AG04450 (cell line): ENCODE measurements at regions of chr3 and their contacts with region 1.

Region 1: GRCh38 chr3:150495563-150496168 is 50.6 kb downstream of the SERP1 start:
- DNase-seq: peak; percentile 16
- H3K4me3 ChIP-seq: no peak overlapping the region
- H3K27ac ChIP-seq: no peak overlapping the region
- H3K27me3 ChIP-seq: no peaks in the 10 kb centered on the region
- CTCF ChIP-seq: peak; percentile 61

Region 2: DNA sequence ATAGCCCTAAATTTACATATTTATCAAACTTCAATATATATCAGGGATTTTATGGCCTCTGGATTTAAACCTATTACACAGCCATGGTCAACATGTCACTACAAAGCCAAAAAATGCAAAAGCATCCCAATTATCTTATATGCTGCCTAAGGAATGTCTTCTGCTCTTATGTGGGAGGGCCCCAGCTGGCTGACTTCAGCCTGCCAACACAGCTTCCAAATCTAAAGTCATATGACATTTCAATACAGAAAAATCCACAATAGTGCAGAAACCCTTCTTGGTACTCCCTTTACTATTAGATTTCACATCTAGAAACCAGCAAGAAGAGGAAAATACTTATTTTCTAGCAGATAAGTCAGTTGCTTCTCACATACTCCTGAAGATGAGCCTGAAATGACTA is 531.4 kb before region 1 on chr3:
- CTCF ChIA-PET with region 1: interaction called, 10 read pairs
- POLR2A ChIA-PET with region 1: no interaction called
- DNase-seq: no peak
- H3K4me3 ChIP-seq: no peak overlapping the region
- H3K27ac ChIP-seq: no peak overlapping the region
- H3K27me3 ChIP-seq: no peaks in the 10 kb centered on the region
- CTCF ChIP-seq: no peak

Region 3: GRCh38 chr3:150062492-150062891 is 433.2 kb before region 1 on chr3:
- CTCF ChIA-PET with region 1: no interaction called
- POLR2A ChIA-PET with region 1: no interaction called
- DNase-seq: no peak
- H3K4me3 ChIP-seq: peak overlapping the region; percentile 36
- H3K27ac ChIP-seq: peak overlapping the region; percentile 75
- H3K27me3 ChIP-seq: no peaks in the 10 kb centered on the region
- CTCF ChIP-seq: no peak

Region 4: DNA sequence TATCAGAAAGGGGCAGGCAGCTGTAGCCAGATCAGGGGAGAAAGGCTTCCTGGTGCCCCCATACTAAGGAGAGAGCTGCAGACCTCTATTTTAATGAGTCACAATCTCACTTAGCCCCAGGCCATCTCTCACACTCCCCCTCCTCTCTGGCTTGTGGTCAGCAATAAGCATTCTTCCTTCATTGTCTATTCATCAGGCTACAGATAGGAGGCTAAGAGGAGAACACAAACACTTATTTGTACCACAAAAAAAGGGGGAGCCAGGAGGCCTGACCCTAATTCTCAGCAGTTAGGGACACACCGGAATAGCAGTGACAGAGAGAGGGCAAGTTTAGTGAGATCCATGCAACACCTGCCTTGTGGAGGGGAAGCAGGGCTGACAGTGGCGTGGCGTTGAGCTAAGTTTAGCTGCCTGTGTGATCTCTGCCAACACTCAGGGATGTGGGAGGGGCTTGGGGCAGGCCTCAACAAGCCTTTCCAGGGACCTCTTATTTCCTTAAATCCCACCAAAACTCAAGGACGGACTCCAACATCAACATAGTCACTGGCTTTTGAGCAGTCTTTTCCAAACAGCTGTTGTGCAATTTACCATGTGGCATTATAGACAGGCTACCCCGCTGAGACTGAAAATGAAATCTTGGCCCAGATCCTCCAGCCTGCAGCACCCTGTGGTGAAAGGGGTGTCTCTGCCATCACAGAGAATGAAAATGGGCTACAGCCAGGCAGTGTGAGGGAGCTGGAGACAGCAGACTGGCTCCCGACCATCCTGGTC is 279.4 kb before region 1 on chr3:
- CTCF ChIA-PET with region 1: interaction called, 15 read pairs
- POLR2A ChIA-PET with region 1: no interaction called
- DNase-seq: no peak
- H3K4me3 ChIP-seq: no peak overlapping the region; the same call in 1 of the 2 replicates
- H3K27ac ChIP-seq: peak overlapping the region; percentile 54
- H3K27me3 ChIP-seq: peaks cover 4% of the 10 kb centered on the region
- CTCF ChIP-seq: peak; percentile 19; the same call in 1 of the 2 replicates

Region 5: DNA sequence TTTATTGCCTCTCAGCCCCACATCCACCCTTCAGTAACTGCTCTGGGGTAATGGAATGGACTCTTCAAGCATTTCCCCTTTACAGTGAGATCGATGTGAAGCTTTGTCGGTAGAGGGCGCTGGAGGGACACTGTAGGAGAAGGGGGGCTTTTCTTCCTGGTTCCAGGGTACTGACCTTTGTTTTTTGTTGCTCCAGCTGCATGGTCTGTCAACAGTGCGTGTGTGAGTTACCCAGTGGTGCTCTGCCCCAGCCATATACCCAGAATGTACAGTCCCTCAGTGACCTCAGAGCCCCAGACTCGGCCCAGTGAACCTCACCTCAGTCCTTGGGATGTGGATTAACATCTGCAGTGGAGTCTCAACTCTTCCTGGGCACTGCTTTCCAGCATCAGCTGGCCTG is 267.8 kb before region 1 on chr3:
- CTCF ChIA-PET with region 1: interaction called, 36 read pairs
- POLR2A ChIA-PET with region 1: no interaction called
- DNase-seq: no peak
- H3K4me3 ChIP-seq: no peak overlapping the region
- H3K27ac ChIP-seq: no peak overlapping the region
- H3K27me3 ChIP-seq: no peaks in the 10 kb centered on the region
- CTCF ChIP-seq: peak; percentile 85

Region 6: GRCh38 chr3:150365132-150365604 is 130.5 kb before region 1 on chr3:
- CTCF ChIA-PET with region 1: no interaction called
- POLR2A ChIA-PET with region 1: no interaction called
- DNase-seq: no peak
- H3K4me3 ChIP-seq: no peak overlapping the region
- H3K27ac ChIP-seq: no peak overlapping the region
- H3K27me3 ChIP-seq: no peaks in the 10 kb centered on the region
- CTCF ChIP-seq: no peak

Region 7: DNA sequence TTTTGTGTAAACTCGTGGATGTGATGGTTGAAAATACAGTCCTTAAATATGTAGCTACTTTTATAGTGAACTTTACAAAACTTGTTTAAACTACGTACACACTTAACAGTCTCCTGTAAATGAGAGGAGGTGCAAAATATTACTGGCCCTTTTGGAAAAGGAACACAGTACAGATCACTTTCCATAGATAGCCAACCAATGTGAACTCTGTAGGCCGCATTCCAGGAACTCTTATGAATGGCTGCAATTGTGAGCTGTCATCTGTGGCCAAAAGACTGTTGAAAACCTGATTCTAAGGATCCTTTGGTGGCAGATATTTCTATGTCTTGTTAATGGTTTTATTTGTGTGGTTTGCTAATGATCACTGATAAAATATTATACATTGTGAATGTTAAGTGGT is 81.4 kb before region 1 on chr3:
- CTCF ChIA-PET with region 1: interaction called, 21 read pairs
- POLR2A ChIA-PET with region 1: no interaction called
- DNase-seq: no peak
- H3K4me3 ChIP-seq: peak overlapping the region; percentile 96
- H3K27ac ChIP-seq: no peak overlapping the region
- H3K27me3 ChIP-seq: no peaks in the 10 kb centered on the region
- CTCF ChIP-seq: no peak

Region 8: GRCh38 chr3:150627557-150627956 is 131.9 kb after region 1 on chr3:
- CTCF ChIA-PET with region 1: no interaction called
- POLR2A ChIA-PET with region 1: no interaction called
- DNase-seq: peak; percentile 26
- H3K4me3 ChIP-seq: no peak overlapping the region
- H3K27ac ChIP-seq: no peak overlapping the region
- H3K27me3 ChIP-seq: no peaks in the 10 kb centered on the region
- CTCF ChIP-seq: no peak

Region 9: DNA sequence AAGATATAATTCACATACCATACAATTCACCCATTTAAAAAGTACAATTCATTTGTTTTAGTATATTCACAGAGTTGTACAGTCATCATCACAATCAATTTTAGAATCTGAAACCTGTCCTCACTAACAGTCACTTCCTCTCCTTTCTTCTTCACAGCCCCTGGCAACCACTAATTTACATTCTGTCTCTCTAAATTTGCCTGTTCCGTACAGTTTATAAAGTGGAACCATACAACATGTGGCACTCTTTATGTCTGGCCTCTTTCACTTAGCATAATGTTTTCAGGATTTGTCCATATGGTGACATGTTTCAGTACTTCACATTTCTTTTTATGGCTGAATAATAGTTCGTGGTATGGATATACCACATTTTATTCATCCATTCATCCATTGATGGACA is 185.4 kb after region 1 on chr3:
- CTCF ChIA-PET with region 1: no interaction called
- POLR2A ChIA-PET with region 1: no interaction called
- DNase-seq: no peak
- H3K4me3 ChIP-seq: no peak overlapping the region
- H3K27ac ChIP-seq: no peak overlapping the region
- H3K27me3 ChIP-seq: no peaks in the 10 kb centered on the region
- CTCF ChIP-seq: no peak